ENCODE measurements at regions of chr11 and their contacts with region 1.

Region 1: GRCh38 chr11:73295231-73295995 is 12.7 kb upstream of the ARHGEF17 start:
- DNase-seq: peak; percentile 63 to 71
- H3K4me3 ChIP-seq: no peak overlapping the region
- H3K27ac ChIP-seq: no peak overlapping the region
- H3K4me1 ChIP-seq: no peaks in the 10 kb centered on the region
- H3K27me3 ChIP-seq: no peaks in the 10 kb centered on the region
- CTCF ChIP-seq: peak; percentile 58 to 84 (median 78)
- POLR2A ChIP-seq: no peak

Region 2: GRCh38 chr11:73335204-73335923 is 40.0 kb after region 1 on chr11:
- intact Hi-C with region 1: loop called (anchors 5 kb)
- DNase-seq: peak; percentile 87 to 91
- H3K4me3 ChIP-seq: no peak overlapping the region
- H3K27ac ChIP-seq: peak overlapping the region; percentile 82 to 94
- H3K4me1 ChIP-seq: peaks cover 27 to 31% of the 10 kb centered on the region in 2 donors
- H3K27me3 ChIP-seq: no peaks in the 10 kb centered on the region
- CTCF ChIP-seq: peak; percentile 94 to 100 (median 97)
- POLR2A ChIP-seq: no peak